Caco-2 (cell line): ENCODE measurements at regions of chr20 and their contacts with region 1.

Region 1: GRCh38 chr20:31496761-31497295 is 17.4 kb upstream of the HM13 start:
- DNase-seq: no peak
- H3K4me3 ChIP-seq: no peak overlapping the region
- H3K4me3 Mint-ChIP-seq: no peak overlapping the region
- H3K27ac Mint-ChIP-seq: no peak overlapping the region
- H3K4me1 ChIP-seq: no peaks in the 10 kb centered on the region
- H3K4me1 Mint-ChIP-seq: no peaks in the 10 kb centered on the region
- H3K27me3 ChIP-seq: no peaks in the 10 kb centered on the region; the same call in 1 of the 2 replicates
- H3K27me3 Mint-ChIP-seq: peaks cover 17% of the 10 kb centered on the region
- CTCF ChIP-seq: no peak

Region 2: DNA sequence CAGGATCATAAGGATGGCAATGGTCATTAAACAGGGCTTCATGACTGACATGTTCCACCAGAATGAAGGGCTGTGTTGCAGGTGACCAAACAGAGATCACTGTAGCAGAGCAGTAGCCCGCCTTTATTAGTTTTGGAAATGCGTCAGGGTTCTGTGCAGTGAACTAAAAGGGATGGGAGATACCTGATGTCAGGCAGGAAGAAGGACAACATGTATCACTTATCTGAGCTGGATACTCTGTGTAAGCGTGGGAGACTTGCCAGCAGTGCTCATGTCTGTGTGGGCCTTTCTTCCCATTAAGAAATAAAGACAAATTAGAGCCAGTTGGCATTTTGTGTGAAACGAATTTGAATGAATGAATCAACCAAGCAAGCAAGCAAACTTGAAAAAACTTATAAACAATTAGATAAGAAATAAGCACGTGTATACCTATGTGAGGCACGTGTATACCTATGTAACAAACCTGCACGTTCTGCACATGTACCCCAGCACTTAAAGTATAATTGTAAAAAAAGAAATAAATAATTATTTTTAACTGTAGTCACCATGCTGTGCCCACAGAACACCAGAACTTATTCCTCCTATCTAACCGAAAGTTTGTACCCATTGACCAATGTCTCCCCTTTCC is 188.2 kb before region 1 on chr20 and contains the start of gene DEFB116:
- CTCF ChIA-PET with region 1: no interaction called
- POLR2A ChIA-PET with region 1: no interaction called
- intact Hi-C with region 1: loop called (anchors 2 kb)
- DNase-seq: no peak
- H3K4me3 ChIP-seq: no peak within 1 kb of the TSS
- H3K4me3 Mint-ChIP-seq: no peak within 1 kb of the TSS
- H3K27ac Mint-ChIP-seq: no peak within 1 kb of the TSS
- H3K4me1 ChIP-seq: no peaks in the 10 kb centered on the region
- H3K4me1 Mint-ChIP-seq: no peaks in the 10 kb centered on the region
- H3K27me3 ChIP-seq: no peaks in the 10 kb centered on the region
- H3K27me3 Mint-ChIP-seq: no peaks in the 10 kb centered on the region
- CTCF ChIP-seq: no peak
- total RNA-seq, gene DEFB116: not detected in 2 replicates

Region 3: GRCh38 chr20:31414380-31414779 is 82.4 kb before region 1 on chr20:
- CTCF ChIA-PET with region 1: interaction called, 31 read pairs
- POLR2A ChIA-PET with region 1: no interaction called
- intact Hi-C with region 1: no loop called
- DNase-seq: no peak
- H3K4me3 ChIP-seq: no peak overlapping the region
- H3K4me3 Mint-ChIP-seq: no peak overlapping the region
- H3K27ac Mint-ChIP-seq: no peak overlapping the region
- H3K4me1 ChIP-seq: no peaks in the 10 kb centered on the region
- H3K4me1 Mint-ChIP-seq: no peaks in the 10 kb centered on the region
- H3K27me3 ChIP-seq: no peaks in the 10 kb centered on the region
- H3K27me3 Mint-ChIP-seq: peaks cover 22% of the 10 kb centered on the region
- CTCF ChIP-seq: no peak

Region 4: GRCh38 chr20:31454365-31454764 is 42.5 kb before region 1 on chr20:
- CTCF ChIA-PET with region 1: interaction called, 117 read pairs
- POLR2A ChIA-PET with region 1: no interaction called
- intact Hi-C with region 1: no loop called
- DNase-seq: no peak
- H3K4me3 ChIP-seq: no peak overlapping the region
- H3K4me3 Mint-ChIP-seq: no peak overlapping the region
- H3K27ac Mint-ChIP-seq: no peak overlapping the region
- H3K4me1 ChIP-seq: no peaks in the 10 kb centered on the region
- H3K4me1 Mint-ChIP-seq: no peaks in the 10 kb centered on the region
- H3K27me3 ChIP-seq: no peaks in the 10 kb centered on the region; the same call in 1 of the 2 replicates
- H3K27me3 Mint-ChIP-seq: peaks cover 8% of the 10 kb centered on the region
- CTCF ChIP-seq: no peak

Region 5: DNA sequence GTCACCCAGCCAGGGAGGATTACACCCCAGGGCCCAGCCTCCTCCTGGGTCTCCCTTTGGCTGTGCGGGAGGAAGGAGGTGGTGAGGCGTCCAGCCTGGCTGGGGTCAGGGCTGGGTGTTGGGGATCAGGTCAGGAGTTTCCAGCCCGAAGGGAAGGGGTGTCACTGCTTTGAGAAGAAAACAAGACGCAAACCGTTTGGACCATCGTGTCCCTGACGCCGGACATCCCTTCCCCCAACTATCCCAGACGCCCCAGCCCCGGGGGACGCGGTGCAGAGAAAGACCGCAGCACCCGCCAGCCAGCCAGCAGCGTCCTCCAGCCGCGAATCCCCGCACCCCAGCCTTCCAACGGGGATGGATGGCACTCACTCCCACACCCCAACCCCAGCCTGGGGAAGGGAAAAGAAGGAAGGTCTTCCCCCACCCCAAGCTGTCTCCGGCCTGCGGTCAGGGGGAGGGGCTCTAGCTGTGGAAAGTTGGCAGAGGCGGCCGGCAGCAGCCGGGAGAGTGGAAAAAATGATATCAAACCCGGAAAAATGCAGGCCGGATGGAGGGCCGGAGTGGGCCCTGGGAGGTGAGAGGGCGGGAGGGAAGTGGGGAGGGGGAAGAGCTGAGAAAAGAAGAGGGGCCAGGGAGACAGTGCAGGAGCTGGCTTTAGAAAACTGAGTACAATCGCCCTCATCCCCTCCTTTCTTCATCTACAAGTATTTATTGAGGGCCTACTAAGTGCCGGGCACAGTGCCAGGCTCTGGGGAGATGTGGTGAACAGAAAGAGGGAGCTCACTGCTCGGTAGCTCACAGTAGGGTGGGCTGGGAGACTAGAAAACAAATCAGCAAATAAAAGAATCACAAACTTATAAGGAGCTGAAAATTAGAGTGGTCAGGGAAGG is 11.1 kb before region 1 on chr20:
- CTCF ChIA-PET with region 1: interaction called, 19 read pairs
- POLR2A ChIA-PET with region 1: interaction called, 5 read pairs
- intact Hi-C with region 1: no loop called
- DNase-seq: no peak
- H3K4me3 ChIP-seq: no peak overlapping the region
- H3K4me3 Mint-ChIP-seq: no peak overlapping the region
- H3K27ac Mint-ChIP-seq: no peak overlapping the region
- H3K4me1 ChIP-seq: no peaks in the 10 kb centered on the region
- H3K4me1 Mint-ChIP-seq: no peaks in the 10 kb centered on the region
- H3K27me3 ChIP-seq: no peaks in the 10 kb centered on the region
- H3K27me3 Mint-ChIP-seq: peaks cover 26% of the 10 kb centered on the region
- CTCF ChIP-seq: no peak

Region 6: DNA sequence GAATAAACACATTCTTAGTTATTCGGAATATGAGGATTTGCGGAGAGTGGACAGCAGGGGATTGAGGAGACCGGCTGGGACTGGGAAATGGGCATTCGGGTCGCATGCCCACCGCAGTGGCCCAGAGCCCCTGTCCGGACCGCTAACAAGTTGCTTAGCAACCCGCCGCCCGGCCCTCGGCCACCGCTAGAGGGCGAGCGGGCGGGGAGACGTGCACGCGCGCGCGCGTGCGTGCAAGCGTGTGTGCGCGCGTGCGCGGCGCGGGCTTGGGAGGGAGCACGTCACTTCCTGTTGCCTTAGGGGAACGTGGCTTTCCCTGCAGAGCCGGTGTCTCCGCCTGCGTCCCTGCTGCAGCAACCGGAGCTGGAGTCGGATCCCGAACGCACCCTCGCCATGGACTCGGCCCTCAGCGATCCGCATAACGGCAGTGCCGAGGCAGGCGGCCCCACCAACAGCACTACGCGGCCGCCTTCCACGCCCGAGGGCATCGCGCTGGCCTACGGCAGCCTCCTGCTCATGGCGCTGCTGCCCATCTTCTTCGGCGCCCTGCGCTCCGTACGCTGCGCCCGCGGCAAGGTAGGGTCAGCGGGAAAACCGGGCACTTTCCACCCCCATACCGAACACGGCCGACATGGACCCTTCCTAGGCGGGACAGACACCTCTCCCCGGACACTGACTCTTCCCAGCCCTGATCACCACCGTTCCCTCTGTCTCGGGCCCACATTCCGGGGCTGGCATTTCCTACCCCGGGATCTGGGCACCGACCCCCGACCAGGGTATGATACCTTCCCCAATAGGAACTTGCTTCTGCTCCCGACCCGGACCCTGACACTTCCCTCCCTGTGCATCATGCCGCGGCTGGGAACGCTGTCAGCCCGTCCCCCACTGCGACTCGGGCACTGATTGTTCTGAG is 17.6 kb after region 1 on chr20 and contains the start of gene HM13:
- CTCF ChIA-PET with region 1: interaction called, 25 read pairs
- POLR2A ChIA-PET with region 1: no interaction called
- intact Hi-C with region 1: no loop called
- DNase-seq: peak; percentile 97 to 98
- H3K4me3 ChIP-seq: peak within 1 kb of the TSS; percentile 74
- H3K4me3 Mint-ChIP-seq: no peak within 1 kb of the TSS
- H3K27ac Mint-ChIP-seq: no peak within 1 kb of the TSS
- H3K4me1 ChIP-seq: peaks cover 22% of the 10 kb centered on the region
- H3K4me1 Mint-ChIP-seq: no peaks in the 10 kb centered on the region
- H3K27me3 ChIP-seq: no peaks in the 10 kb centered on the region
- H3K27me3 Mint-ChIP-seq: no peaks in the 10 kb centered on the region
- CTCF ChIP-seq: peak; percentile 98 to 100
- total RNA-seq, gene HM13: 435 and 443 TPM in 2 replicates